Right ventricle myocardium inferior (tissue), 1 donor: ENCODE measurements at regions of chr11 and their contacts with region 1.

Region 1: GRCh38 chr11:34174412-34175041 is 69.1 kb downstream of the NAT10 start:
- DNase-seq: peak; percentile 93
- ATAC-seq: peak; percentile 99

Region 2: GRCh38 chr11:33996498-33997454 is 177.8 kb before region 1 on chr11:
- intact Hi-C with region 1: loop called (anchors 1 kb)
- DNase-seq: no peak
- ATAC-seq: peak; percentile 94

Region 3: DNA sequence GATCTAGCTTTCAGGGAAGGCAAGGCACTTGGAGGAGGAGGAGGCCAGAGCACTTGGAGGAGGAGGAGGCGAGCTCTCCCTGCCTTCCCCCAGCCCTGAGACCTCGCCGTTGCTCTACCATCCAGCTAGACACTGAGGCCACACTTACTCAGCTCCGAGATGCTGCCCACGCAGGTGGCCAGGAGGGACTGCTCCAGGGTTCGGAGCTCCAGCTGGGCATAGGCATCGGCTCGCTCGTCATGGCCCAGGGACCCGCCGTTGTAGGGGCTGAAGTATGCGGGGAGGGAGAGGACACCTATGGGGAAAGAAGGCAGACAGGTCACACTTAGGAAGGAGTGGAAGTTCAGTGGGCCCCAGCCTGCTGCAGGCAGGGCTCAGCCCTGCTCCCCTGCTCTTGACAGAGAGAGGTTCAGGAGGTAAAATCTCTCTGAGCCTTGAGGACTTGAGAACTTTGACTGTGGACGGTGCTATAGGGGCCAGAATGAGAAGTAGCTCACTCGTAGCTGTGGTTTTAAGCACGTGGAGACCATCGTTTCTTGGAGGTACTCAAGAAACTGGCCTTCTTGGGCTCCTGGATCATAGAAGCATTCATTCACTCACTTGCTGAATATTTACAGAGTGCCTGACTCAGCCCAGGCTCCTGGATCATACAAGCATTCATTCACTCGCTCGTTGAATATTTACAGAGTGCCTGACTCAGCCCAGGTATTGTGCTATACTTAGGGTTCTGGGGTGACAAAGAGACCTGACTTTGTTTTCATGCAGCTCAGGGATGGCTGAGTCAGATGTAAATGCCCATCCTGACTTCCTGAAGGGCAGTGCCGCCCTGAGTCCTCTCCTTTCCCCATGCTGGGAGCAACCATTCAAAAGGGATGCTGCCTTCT is 30.1 kb after region 1 on chr11:
- intact Hi-C with region 1: no loop called
- DNase-seq: no peak
- ATAC-seq: no peak

Region 4: GRCh38 chr11:34492806-34493414 is 318.4 kb after region 1 on chr11:
- intact Hi-C with region 1: loop called (anchors 10 kb)
- DNase-seq: no peak
- ATAC-seq: no peak